CD4-positive, alpha-beta memory T cell (primary cell): ENCODE measurements at regions of chr2 and their contacts with region 1.

Region 1: GRCh38 chr2:38581193-38582147 is 21.3 kb downstream of the HNRNPLL start:
- DNase-seq: peak; percentile 62 to 82 (median 81)
- H3K4me3 ChIP-seq: no peak overlapping the region
- H3K4me3 Mint-ChIP-seq: peak overlapping the region in 1 of 8 donors; percentile 22
- H3K27ac ChIP-seq: no peak overlapping the region
- H3K27ac Mint-ChIP-seq: peak overlapping the region in 5 of 7 donors; percentile 41 to 65 (median 62)
- H3K4me1 ChIP-seq: peaks cover 51% of the 10 kb centered on the region
- H3K4me1 Mint-ChIP-seq: peaks cover 26 to 64% (median 41%) of the 10 kb centered on the region in 4 donors
- H3K27me3 ChIP-seq: no peaks in the 10 kb centered on the region
- H3K27me3 Mint-ChIP-seq: no peaks in the 10 kb centered on the region

Region 2: GRCh38 chr2:38315707-38316333 is 265.6 kb before region 1 on chr2:
- CTCF ChIA-PET with region 1: interaction called, 10 read pairs
- POLR2A ChIA-PET with region 1: no interaction called
- intact Hi-C with region 1: no loop called
- DNase-seq: peak in 4 of 5 donors; percentile 33 to 54 (median 37)
- H3K4me3 ChIP-seq: no peak overlapping the region
- H3K4me3 Mint-ChIP-seq: no peak overlapping the region
- H3K27ac ChIP-seq: no peak overlapping the region
- H3K27ac Mint-ChIP-seq: peak overlapping the region in 3 of 7 donors; percentile 19 to 83 (median 57)
- H3K4me1 ChIP-seq: no peaks in the 10 kb centered on the region
- H3K4me1 Mint-ChIP-seq: no peaks in the 10 kb centered on the region
- H3K27me3 ChIP-seq: no peaks in the 10 kb centered on the region
- H3K27me3 Mint-ChIP-seq: no peaks in the 10 kb centered on the region

Region 3: DNA sequence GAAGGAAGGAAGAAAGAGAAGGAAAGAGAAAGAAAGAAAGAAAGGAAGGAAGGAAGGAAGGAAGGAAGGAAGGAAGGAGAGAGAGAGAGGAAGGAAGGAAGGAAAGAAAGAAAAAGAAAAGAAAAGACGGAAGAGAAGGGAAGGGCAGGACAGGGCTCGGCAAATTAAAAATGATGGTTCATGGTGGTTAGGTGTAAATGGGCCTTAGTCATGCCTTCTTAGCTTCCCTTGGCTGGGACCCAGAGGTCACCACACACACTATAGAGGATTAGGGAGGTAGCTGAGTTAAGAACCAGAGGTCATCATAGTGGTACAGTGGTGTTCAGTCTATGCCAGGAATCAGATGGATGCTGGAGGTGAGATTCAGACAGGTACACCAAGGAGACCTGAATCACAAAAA is 195.1 kb before region 1 on chr2:
- CTCF ChIA-PET with region 1: no interaction called
- POLR2A ChIA-PET with region 1: no interaction called
- intact Hi-C with region 1: no loop called
- DNase-seq: no peak
- H3K4me3 ChIP-seq: no peak overlapping the region
- H3K4me3 Mint-ChIP-seq: peak overlapping the region in 1 of 8 donors; percentile 15
- H3K27ac ChIP-seq: no peak overlapping the region
- H3K27ac Mint-ChIP-seq: peak overlapping the region in 5 of 7 donors; percentile 2 to 66 (median 37)
- H3K4me1 ChIP-seq: peaks cover 23% of the 10 kb centered on the region
- H3K4me1 Mint-ChIP-seq: peaks cover 16 to 41% (median 29%) of the 10 kb centered on the region in 4 donors
- H3K27me3 ChIP-seq: no peaks in the 10 kb centered on the region
- H3K27me3 Mint-ChIP-seq: peaks cover 4 to 7% of the 10 kb centered on the region in 2 donors

Region 4: DNA sequence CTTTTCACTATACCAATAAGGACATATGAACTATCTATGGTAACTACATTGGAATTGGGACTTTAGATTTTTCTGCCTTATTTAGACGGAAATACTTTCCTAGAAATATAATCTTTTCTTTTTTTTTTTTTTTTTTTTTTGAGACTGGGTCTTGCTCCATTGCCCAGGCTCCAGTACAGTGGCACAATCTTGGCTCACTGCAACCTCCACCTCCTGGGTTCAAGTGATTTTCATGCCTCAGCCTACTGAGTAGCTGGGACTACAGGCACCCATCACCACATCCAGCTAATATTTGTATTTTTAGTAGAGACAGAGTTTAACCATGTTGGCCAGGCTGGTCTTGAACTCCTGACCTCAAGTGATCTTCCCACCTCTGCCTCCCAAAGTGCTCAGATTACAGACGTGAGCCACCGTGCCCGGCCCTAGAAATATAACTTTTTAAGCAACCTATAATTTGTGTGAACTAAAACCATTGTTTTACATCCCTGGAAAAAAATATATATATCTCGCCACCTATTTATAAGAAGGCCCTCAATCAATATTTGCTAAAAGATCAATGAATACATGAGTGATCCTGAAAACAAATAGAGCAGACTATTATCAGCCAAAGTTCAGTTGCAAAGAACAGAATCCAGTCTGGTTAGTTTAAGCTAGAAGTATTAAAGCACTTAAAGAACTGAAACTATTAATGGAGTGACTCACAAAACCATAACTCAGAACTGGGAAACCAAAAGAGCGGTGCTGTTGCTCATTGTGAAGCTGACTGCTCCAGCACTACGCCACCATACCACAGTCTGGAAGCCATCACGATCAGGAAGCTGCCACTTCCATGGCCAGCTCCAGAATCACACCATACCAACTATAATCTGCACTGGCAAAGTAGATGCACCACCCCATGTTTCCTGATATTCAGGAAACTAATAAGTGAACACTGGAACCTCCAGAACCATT is 29.7 kb after region 1 on chr2:
- CTCF ChIA-PET with region 1: interaction called, 268 read pairs
- POLR2A ChIA-PET with region 1: interaction called, 3 read pairs
- intact Hi-C with region 1: no loop called
- DNase-seq: peak in 1 of 5 donors; percentile 47
- H3K4me3 ChIP-seq: peak overlapping the region in 1 of 2 donors; percentile 14
- H3K4me3 Mint-ChIP-seq: peak overlapping the region in 5 of 8 donors; percentile 43 to 82 (median 63)
- H3K27ac ChIP-seq: no peak overlapping the region
- H3K27ac Mint-ChIP-seq: peak overlapping the region in 3 of 7 donors; percentile 43 to 60 (median 53)
- H3K4me1 ChIP-seq: peaks cover 43% of the 10 kb centered on the region
- H3K4me1 Mint-ChIP-seq: peaks cover 16 to 53% (median 30%) of the 10 kb centered on the region in 4 donors
- H3K27me3 ChIP-seq: no peaks in the 10 kb centered on the region
- H3K27me3 Mint-ChIP-seq: no peaks in the 10 kb centered on the region

Region 5: DNA sequence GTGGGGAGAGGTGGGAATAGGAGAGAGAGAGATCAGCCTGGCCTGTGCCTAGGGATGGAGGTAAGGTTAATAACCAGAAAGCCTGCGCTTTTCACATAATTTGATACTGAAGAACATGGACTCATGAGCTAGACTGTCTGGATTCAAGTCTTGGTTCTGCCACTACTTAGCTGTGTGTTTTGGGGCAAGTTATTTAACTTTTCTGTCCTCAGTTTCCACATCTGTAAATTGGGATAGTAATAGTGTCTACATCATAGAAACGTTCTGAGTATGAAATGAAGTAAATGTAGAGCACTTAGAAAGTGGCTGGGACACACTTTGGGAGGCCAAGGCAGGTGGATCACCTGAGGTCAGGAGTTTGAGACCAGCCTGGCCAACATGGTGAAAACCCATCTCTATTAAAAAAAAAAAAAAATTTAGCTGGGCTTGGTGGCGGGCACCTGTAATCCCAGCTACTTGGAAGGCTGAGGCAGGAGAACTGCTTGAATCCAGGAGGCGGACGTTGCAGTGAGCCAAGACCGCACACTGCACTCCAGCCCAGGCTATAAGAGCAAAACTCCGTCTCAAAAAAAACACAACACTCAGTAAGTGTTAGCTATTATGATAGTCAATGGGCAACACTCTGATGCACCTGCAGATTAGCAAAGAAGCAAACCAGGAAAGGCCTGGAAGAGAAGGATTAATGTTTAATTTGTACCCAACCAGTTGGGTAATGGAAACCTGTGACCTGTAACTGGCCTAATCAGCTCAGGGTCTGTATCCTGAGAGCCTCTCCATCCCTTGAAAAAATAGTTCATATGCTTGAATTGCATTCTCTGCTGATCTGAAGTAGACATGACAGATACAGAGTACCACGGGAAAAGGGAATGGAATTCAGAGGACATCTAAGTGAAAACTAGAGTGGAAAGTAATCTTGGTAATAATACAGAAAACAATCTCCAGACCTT is 91.2 kb after region 1 on chr2:
- CTCF ChIA-PET with region 1: interaction called, 49 read pairs
- POLR2A ChIA-PET with region 1: interaction called, 16 read pairs
- intact Hi-C with region 1: no loop called
- DNase-seq: no peak
- H3K4me3 ChIP-seq: no peak overlapping the region
- H3K4me3 Mint-ChIP-seq: peak overlapping the region in 6 of 8 donors; percentile 4 to 73 (median 28)
- H3K27ac ChIP-seq: no peak overlapping the region
- H3K27ac Mint-ChIP-seq: peak overlapping the region; percentile 57 to 93 (median 87)
- H3K4me1 ChIP-seq: peaks cover 87% of the 10 kb centered on the region
- H3K4me1 Mint-ChIP-seq: peaks cover 47 to 86% (median 67%) of the 10 kb centered on the region in 4 donors
- H3K27me3 ChIP-seq: no peaks in the 10 kb centered on the region
- H3K27me3 Mint-ChIP-seq: no peaks in the 10 kb centered on the region

Region 6: DNA sequence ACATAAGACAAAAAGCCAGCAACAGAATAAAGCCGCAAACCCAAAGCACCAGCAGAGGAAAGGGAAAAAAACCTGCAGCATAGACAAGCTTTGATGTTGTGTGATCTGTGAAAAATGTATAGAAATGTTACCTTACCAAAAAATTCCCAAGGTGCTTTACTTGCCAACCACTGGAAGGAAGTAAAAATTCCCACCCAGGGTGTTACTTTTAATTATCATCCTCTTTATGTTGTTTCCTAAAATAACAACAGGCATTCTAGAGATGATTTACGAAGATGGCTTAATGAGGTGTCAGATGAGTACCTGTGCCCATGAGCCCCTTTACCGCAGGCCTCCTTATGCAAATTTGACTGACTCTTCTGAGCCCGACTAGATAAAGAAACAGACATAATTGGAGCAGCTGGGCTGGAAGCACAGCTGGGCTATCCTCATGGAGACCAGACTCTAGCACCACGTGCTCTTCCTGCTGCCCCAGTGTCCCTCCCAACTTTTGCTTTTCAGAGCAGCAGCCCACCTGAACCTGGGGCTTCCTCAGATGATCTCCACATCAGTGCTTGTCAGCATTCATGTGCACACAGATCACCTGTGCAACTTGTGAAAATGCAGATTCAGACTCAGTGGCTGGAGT is 128.2 kb after region 1 on chr2:
- CTCF ChIA-PET with region 1: interaction called, 17 read pairs
- POLR2A ChIA-PET with region 1: interaction called, 7 read pairs
- intact Hi-C with region 1: no loop called
- DNase-seq: peak; percentile 81 to 87 (median 84)
- H3K4me3 ChIP-seq: peak overlapping the region in 1 of 2 donors; percentile 13
- H3K4me3 Mint-ChIP-seq: peak overlapping the region; percentile 33 to 90 (median 80)
- H3K27ac ChIP-seq: peak overlapping the region; percentile 46
- H3K27ac Mint-ChIP-seq: peak overlapping the region; percentile 92 to 98 (median 96)
- H3K4me1 ChIP-seq: peaks cover 84% of the 10 kb centered on the region
- H3K4me1 Mint-ChIP-seq: peaks cover 58 to 88% (median 74%) of the 10 kb centered on the region in 4 donors
- H3K27me3 ChIP-seq: no peaks in the 10 kb centered on the region
- H3K27me3 Mint-ChIP-seq: no peaks in the 10 kb centered on the region

Region 7: DNA sequence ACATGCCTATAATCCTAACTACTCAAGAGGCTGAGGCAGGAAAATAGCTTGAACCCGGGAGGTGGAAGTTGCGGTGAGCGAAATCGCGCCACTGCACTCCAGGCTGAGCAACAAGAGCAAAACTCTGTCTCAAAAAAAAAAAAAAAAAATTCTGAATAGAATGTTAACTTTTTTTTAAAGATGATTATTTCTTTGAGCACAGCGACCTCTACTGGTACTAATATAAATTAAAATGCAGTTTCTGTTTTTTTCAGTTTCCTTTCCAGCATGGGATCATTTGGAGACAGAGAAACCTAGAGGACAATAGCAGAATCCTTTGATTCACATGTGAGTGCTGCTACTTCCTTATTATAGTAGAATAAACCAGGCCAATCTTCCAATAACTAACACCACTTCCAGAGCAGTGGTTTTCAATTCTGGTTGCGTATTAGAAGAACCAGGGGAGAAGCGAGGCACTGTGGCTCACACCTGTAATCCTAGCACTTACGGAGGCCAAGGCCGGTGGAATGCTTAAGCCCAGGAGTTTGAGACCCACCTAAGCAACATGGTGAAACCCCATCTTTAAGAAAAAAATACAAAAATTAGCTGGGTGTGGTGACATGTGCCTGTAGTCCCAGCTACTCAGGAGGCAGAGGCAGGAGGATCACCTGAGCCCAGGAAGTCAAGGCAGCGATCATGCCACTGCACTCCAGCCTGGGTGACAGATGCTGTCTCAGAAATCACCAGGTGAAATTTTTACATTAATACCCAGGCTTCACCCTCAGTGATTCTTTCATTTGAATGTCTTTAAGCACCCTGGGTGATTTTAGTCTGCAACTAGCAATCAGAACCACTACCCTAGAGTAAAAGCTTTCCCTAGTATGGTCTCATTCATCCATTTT is 159.6 kb after region 1 on chr2:
- CTCF ChIA-PET with region 1: interaction called, 138 read pairs
- POLR2A ChIA-PET with region 1: interaction called, 24 read pairs
- intact Hi-C with region 1: loop called (anchors 1 kb)
- DNase-seq: peak; percentile 60 to 71 (median 65)
- H3K4me3 ChIP-seq: no peak overlapping the region
- H3K4me3 Mint-ChIP-seq: peak overlapping the region in 4 of 8 donors; percentile 15 to 39 (median 27)
- H3K27ac ChIP-seq: no peak overlapping the region
- H3K27ac Mint-ChIP-seq: peak overlapping the region; percentile 30 to 99 (median 83)
- H3K4me1 ChIP-seq: peaks cover 54% of the 10 kb centered on the region
- H3K4me1 Mint-ChIP-seq: peaks cover 31 to 78% (median 44%) of the 10 kb centered on the region in 4 donors
- H3K27me3 ChIP-seq: no peaks in the 10 kb centered on the region
- H3K27me3 Mint-ChIP-seq: no peaks in the 10 kb centered on the region